ENCODE measurements at regions of chr1 and their contacts with region 1.

Region 1: GRCh38 chr1:37692078-37692833 is at the start of gene CDCA8:
- DNase-seq: peak; percentile 99
- ATAC-seq: peak; percentile 88
- H3K4me3 Mint-ChIP-seq: peak within 1 kb of the TSS; percentile 97
- H3K27ac Mint-ChIP-seq: peak within 1 kb of the TSS; percentile 92
- H3K4me1 Mint-ChIP-seq: peaks cover 32% of the 10 kb centered on the region
- H3K27me3 Mint-ChIP-seq: no peaks in the 10 kb centered on the region
- total RNA-seq, gene CDCA8: 61.2 to 61.7 TPM

Region 2: GRCh38 chr1:36223993-36224536 is 1468.2 kb before region 1 on chr1 and contains the start of gene THRAP3:
- CTCF ChIA-PET with region 1: no interaction called
- POLR2A ChIA-PET with region 1: no interaction called
- intact Hi-C with region 1: loop called in 1 of 2 experiments (anchors 1 kb)
- DNase-seq: peak; percentile 100
- ATAC-seq: peak; percentile 93
- H3K4me3 Mint-ChIP-seq: peak within 1 kb of the TSS; percentile 96
- H3K27ac Mint-ChIP-seq: peak within 1 kb of the TSS; percentile 100
- H3K4me1 Mint-ChIP-seq: peaks cover 28% of the 10 kb centered on the region
- H3K27me3 Mint-ChIP-seq: no peaks in the 10 kb centered on the region
- total RNA-seq, gene THRAP3: 149 to 182 TPM

Region 3: DNA sequence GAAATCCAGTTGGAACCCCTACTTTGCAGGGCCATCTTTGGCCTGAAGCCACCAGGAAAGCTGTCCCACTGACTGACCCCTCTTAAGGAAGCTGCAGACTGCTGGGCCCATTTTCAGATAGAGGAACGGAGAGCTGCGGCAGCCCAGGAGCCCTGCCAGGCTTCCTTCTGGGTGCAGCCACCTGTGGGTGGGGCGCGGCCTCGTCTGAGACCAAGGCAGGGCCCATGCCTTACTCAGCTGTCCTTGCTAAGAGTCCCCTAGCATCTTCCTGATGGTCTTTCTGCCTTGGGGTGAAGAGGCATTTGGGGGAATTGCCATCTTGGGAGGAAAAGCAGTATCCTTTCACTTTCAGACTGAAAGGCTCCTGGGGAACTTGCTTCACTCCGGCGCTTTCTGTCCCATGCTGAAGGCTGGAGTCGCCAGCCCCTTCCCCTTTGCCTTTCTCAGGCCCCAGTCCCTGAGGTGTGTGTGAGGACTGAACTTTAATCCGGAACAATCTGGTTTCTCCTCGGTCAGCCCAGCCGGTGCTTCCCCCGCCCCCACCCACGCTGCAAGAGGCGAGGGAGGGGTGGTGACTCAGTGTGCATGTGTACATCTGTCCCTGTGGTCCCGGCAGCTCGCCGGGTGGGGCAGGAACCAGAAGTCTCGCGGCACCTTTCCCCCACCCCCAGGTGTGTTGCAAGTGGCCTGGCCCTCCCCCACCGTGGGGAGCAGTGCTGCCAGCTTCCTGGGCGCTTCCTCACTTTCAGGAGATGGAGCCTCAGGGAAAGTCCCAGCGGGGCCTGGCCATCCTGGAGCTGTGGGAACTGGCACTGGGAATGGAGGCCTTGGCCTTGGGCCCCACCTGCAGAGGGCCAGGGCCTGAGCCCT is 212.8 kb before region 1 on chr1:
- CTCF ChIA-PET with region 1: interaction called, 3 read pairs
- POLR2A ChIA-PET with region 1: interaction called, 7 read pairs
- intact Hi-C with region 1: loop called (anchors 1 to 5 kb)
- DNase-seq: peak; percentile 96
- ATAC-seq: peak; percentile 52
- H3K4me3 Mint-ChIP-seq: peak overlapping the region; percentile 95
- H3K27ac Mint-ChIP-seq: peak overlapping the region; percentile 98
- H3K4me1 Mint-ChIP-seq: peaks cover 32% of the 10 kb centered on the region
- H3K27me3 Mint-ChIP-seq: no peaks in the 10 kb centered on the region

Region 4: GRCh38 chr1:37655274-37655673 is 37.0 kb before region 1 on chr1:
- CTCF ChIA-PET with region 1: no interaction called
- POLR2A ChIA-PET with region 1: no interaction called
- intact Hi-C with region 1: no loop called
- DNase-seq: no peak
- ATAC-seq: no peak
- H3K4me3 Mint-ChIP-seq: no peak overlapping the region
- H3K27ac Mint-ChIP-seq: no peak overlapping the region
- H3K4me1 Mint-ChIP-seq: no peaks in the 10 kb centered on the region
- H3K27me3 Mint-ChIP-seq: peaks cover 2% of the 10 kb centered on the region

Region 5: GRCh38 chr1:37755290-37755689 is 63.0 kb after region 1 on chr1:
- CTCF ChIA-PET with region 1: no interaction called
- POLR2A ChIA-PET with region 1: no interaction called
- intact Hi-C with region 1: loop called (anchors 1 to 5 kb)
- DNase-seq: peak; percentile 70
- ATAC-seq: peak; percentile 93
- H3K4me3 Mint-ChIP-seq: no peak overlapping the region
- H3K27ac Mint-ChIP-seq: no peak overlapping the region
- H3K4me1 Mint-ChIP-seq: peaks cover 18% of the 10 kb centered on the region
- H3K27me3 Mint-ChIP-seq: peaks cover 33% of the 10 kb centered on the region

Region 6: GRCh38 chr1:37931361-37932158 is 239.3 kb after region 1 on chr1:
- CTCF ChIA-PET with region 1: no interaction called
- POLR2A ChIA-PET with region 1: no interaction called
- intact Hi-C with region 1: loop called in 1 of 2 experiments (anchors 1 kb)
- DNase-seq: peak; percentile 98
- ATAC-seq: peak; percentile 98
- H3K4me3 Mint-ChIP-seq: peak overlapping the region; percentile 86
- H3K27ac Mint-ChIP-seq: peak overlapping the region; percentile 80
- H3K4me1 Mint-ChIP-seq: peaks cover 33% of the 10 kb centered on the region
- H3K27me3 Mint-ChIP-seq: no peaks in the 10 kb centered on the region

Region 7: GRCh38 chr1:38859561-38860453 is 1167.6 kb after region 1 on chr1 and contains the start of gene RRAGC:
- CTCF ChIA-PET with region 1: no interaction called
- POLR2A ChIA-PET with region 1: no interaction called
- intact Hi-C with region 1: loop called in 1 of 2 experiments (anchors 10 kb)
- DNase-seq: peak; percentile 99
- ATAC-seq: peak; percentile 98
- H3K4me3 Mint-ChIP-seq: peak within 1 kb of the TSS; percentile 98
- H3K27ac Mint-ChIP-seq: peak within 1 kb of the TSS; percentile 91
- H3K4me1 Mint-ChIP-seq: peaks cover 58% of the 10 kb centered on the region
- H3K27me3 Mint-ChIP-seq: no peaks in the 10 kb centered on the region
- total RNA-seq, gene RRAGC: 15.8 to 19.0 TPM

Region 8: DNA sequence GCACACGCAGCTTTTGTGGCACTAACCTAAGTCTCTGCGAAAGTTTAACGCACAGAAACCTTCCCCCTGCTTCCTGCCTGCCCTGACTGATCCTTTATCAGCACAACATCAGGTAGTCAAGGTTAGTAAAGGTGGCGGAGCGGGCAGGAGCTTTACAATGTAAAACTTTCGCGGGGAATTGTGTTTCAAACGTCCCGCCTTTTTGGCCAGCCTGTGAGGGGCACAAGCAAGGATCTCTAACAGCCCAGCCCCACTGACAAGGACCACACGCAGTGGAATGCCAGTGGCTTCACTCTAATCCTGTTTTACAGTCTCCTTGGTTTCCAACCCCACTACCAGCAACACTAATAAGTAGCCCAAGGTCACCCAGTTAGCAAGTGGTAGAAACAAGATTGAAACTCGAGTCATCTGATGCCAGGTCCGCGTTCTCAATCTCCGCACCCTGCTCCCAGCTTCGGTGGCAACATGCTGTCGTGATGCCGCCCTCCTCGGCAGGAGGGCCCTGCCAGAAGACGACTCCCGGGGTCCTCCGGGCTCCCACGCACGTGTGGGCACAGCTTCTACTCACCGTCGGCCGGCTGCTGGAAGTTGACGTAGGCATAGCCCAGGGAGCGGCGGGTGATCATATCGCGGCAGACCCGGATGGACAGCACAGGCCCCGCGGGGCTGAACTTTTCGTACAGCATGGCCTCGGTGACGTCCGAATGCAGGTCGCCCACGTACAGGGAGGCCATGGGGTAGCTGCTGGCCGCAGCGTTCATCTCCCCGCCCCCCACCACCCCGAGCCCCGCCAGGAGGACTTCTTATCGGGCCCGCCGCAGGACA is 1883.1 kb after region 1 on chr1:
- CTCF ChIA-PET with region 1: no interaction called
- POLR2A ChIA-PET with region 1: no interaction called
- intact Hi-C with region 1: loop called in 1 of 2 experiments (anchors 10 kb)
- DNase-seq: peak; percentile 69
- ATAC-seq: peak; percentile 40
- H3K4me3 Mint-ChIP-seq: peak overlapping the region; percentile 90
- H3K27ac Mint-ChIP-seq: peak overlapping the region; percentile 90
- H3K4me1 Mint-ChIP-seq: peaks cover 42% of the 10 kb centered on the region
- H3K27me3 Mint-ChIP-seq: no peaks in the 10 kb centered on the region